ENCODE measurements at regions of chr11 and their contacts with region 1.

Region 1: GRCh38 chr11:9565822-9566560 is 7.5 kb upstream of the WEE1 start:
- DNase-seq: peak; percentile 84
- ATAC-seq: peak; percentile 93
- H3K4me3 ChIP-seq: peak overlapping the region; percentile 17; the same call in 1 of the 2 replicates
- H3K27ac ChIP-seq: peak overlapping the region; percentile 54
- H3K4me1 ChIP-seq: peaks cover 21% of the 10 kb centered on the region
- H3K27me3 ChIP-seq: no peaks in the 10 kb centered on the region
- CTCF ChIP-seq: no peak
- EP300 ChIP-seq: peak; percentile 77 to 80; a peak in 3 of 4 replicates
- POLR2A ChIP-seq: no peak
- RAD21 ChIP-seq: no peak

Region 2: GRCh38 chr11:9516113-9516512 is 49.9 kb before region 1 on chr11:
- CTCF ChIA-PET with region 1: no interaction called
- POLR2A ChIA-PET with region 1: interaction called, 3 read pairs
- RAD21 ChIA-PET with region 1: no interaction called
- SMC1A ChIA-PET with region 1: no interaction called
- in situ Hi-C with region 1: no loop called
- intact Hi-C with region 1: loop called (anchors 5 kb)
- DNase-seq: no peak
- ATAC-seq: no peak
- H3K4me3 ChIP-seq: no peak overlapping the region
- H3K27ac ChIP-seq: no peak overlapping the region
- H3K4me1 ChIP-seq: no peaks in the 10 kb centered on the region; the same call in 1 of the 2 replicates
- H3K27me3 ChIP-seq: no peaks in the 10 kb centered on the region
- CTCF ChIP-seq: no peak
- EP300 ChIP-seq: no peak
- POLR2A ChIP-seq: no peak
- RAD21 ChIP-seq: no peak